A549 (cell line): ENCODE measurements at regions of chr14 and their contacts with region 1.

Region 1: DNA sequence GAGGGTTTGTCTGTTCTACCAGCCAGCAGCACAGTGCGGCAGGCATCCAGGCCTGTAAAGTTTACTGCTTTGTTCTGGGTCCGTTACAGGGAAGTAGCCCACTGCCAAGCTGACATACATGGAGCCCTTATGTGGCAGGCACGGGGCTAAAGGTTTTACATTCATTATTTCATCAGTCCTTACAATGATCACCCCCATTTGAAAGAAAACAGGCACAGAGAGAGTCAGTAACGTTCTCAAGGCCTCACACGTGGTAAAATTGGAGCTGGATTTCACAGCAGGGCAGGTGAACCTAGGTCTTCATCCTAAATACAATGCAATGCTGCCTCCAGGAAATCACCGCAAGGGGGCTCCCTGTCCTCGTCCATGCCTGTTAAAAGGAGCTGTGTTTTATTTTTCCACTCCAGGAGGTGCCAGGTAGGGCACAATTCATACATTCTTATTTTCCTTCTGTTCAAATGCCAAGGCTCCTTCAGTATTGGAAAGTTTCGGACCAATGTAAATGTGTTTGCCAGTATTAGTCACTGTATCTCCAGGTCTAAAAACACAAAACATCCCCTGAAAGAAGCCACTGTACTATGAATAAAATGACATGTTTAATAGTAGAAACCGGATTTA is 172.2 kb upstream of the GZMB start:
- DNase-seq: peak; percentile 17 to 68
- ATAC-seq: peak; percentile 80 to 85; a peak in 5 of 6 replicates
- H3K4me3 ChIP-seq: no peak overlapping the region
- H3K27ac ChIP-seq: no peak overlapping the region
- H3K4me1 ChIP-seq: no peaks in the 10 kb centered on the region
- CTCF ChIP-seq: peak; percentile 69
- EP300 ChIP-seq: no peak
- POLR2A ChIP-seq: no peak
- RAD21 ChIP-seq: peak; percentile 82 to 86

Region 2: GRCh38 chr14:24741871-24742270 is 64.3 kb before region 1 on chr14:
- CTCF ChIA-PET with region 1: no interaction called
- POLR2A ChIA-PET with region 1: no interaction called
- DNase-seq: no peak
- ATAC-seq: no peak
- H3K4me3 ChIP-seq: no peak overlapping the region
- H3K27ac ChIP-seq: no peak overlapping the region
- H3K4me1 ChIP-seq: no peaks in the 10 kb centered on the region
- CTCF ChIP-seq: no peak
- EP300 ChIP-seq: no peak
- POLR2A ChIP-seq: no peak
- RAD21 ChIP-seq: no peak

Region 3: DNA sequence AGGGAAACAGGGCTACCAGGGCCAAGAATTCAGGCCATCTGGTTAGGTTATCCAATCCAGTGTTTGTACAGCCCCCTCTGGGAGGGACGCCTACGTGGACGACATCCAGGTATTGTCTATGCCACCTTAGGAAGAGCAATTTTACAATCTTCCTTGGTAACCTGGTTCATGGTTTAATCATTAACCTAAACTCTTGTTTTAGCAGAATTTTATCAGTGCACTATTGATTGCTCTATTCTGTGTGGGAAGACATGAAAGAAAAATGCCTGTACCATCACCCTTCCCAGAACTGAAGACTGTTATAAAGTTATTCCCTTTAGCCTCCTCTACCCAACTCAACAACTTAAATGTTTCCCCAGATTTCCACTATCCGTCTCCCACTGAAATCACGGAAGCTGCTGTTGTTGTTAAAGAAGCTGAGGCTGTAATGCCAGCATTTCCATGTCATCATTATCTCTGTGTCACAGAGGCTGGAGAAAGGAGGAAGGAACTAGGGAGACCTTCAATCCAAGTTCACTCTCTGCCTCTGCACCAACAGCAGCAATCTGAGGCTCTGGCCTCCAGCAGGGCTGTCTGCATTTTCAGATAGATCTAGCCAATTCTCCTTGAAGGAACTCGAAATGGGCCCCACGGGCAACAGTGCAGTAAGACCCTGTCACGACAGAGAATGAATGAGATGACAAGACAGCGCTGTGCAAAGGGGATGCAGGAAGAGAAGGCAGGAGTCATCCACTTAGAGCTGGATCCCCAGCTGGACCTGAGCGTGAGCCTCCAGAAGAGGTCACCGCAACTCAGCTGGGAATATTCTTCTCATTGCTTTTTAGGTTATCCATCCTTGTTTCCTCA is 11.3 kb after region 1 on chr14:
- CTCF ChIA-PET with region 1: interaction called, 31 read pairs
- POLR2A ChIA-PET with region 1: no interaction called
- DNase-seq: peak in 1 of 2 experiments; percentile 24
- ATAC-seq: peak; percentile 62 to 63; a peak in 4 of 6 replicates
- H3K4me3 ChIP-seq: no peak overlapping the region
- H3K27ac ChIP-seq: no peak overlapping the region
- H3K4me1 ChIP-seq: peaks cover 12% of the 10 kb centered on the region; the same call in 1 of the 3 replicates
- CTCF ChIP-seq: 0 out of 3 replicates have a peak, but pooled peaks have one; percentile 23
- EP300 ChIP-seq: no peak
- POLR2A ChIP-seq: no peak
- RAD21 ChIP-seq: peak; percentile 40 to 47

Region 4: DNA sequence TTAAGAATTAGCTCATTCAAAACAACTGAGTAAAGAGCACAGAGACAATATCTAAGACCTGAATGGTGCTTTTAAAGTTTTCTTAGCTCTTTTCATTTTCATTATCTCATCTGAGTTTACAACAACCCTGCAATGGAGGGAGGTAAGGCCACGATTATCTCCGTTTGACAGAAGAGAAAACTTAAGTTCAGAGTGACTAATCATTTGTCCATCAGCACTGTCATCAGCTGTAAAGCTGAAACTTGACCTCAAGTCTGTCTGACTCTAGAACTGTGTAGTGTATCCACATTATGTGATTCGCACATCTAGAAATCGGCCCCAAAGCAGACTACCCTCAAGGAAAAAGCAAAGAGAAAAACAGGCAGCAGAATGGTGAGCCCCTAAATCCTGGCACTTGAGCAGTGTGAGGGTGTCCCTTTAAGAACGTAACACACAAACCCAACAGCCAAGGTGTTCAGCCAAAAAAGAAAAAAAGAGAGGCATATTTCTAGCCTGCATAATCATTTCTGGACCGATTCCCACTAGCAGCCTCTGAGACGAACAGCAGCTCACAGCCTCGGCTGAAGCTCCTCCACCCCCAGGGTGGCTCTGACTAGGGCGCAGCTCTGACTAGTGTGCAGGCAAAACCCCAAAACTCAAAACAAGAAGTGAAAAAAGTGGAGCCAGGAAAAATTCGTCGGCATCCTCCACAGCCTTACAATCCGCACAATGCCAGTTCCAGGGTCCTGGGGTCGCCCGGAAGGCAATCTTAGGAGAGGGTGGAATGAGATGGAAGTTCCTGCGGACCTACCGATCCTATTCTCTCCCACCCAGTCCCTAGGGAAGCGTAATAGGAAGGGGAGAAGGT is 242.2 kb after region 1 on chr14:
- CTCF ChIA-PET with region 1: interaction called, 10 read pairs
- POLR2A ChIA-PET with region 1: no interaction called
- DNase-seq: no peak
- ATAC-seq: no peak
- H3K4me3 ChIP-seq: no peak overlapping the region
- H3K27ac ChIP-seq: no peak overlapping the region
- H3K4me1 ChIP-seq: peaks cover 7% of the 10 kb centered on the region; the same call in 1 of the 3 replicates
- CTCF ChIP-seq: no peak
- EP300 ChIP-seq: no peak
- POLR2A ChIP-seq: no peak
- RAD21 ChIP-seq: no peak